Left ventricle myocardium superior (tissue), 1 donor: ENCODE measurements at regions of chr10 and their contacts with region 1.

Region 1: GRCh38 chr10:42875792-42876460 is 93.3 kb downstream of the BMS1 start:
- DNase-seq: no peak
- ATAC-seq: peak; percentile 64

Region 2: GRCh38 chr10:43000651-43001423 is 124.9 kb after region 1 on chr10:
- intact Hi-C with region 1: no loop called
- DNase-seq: no peak
- ATAC-seq: no peak

Region 3: GRCh38 chr10:43093423-43094076 is 217.6 kb after region 1 on chr10:
- intact Hi-C with region 1: loop called (anchors 10 kb)
- DNase-seq: no peak
- ATAC-seq: peak; percentile 61